PC-9 (cell line): ENCODE measurements at regions of chr16 and their contacts with region 1.

Region 1: DNA sequence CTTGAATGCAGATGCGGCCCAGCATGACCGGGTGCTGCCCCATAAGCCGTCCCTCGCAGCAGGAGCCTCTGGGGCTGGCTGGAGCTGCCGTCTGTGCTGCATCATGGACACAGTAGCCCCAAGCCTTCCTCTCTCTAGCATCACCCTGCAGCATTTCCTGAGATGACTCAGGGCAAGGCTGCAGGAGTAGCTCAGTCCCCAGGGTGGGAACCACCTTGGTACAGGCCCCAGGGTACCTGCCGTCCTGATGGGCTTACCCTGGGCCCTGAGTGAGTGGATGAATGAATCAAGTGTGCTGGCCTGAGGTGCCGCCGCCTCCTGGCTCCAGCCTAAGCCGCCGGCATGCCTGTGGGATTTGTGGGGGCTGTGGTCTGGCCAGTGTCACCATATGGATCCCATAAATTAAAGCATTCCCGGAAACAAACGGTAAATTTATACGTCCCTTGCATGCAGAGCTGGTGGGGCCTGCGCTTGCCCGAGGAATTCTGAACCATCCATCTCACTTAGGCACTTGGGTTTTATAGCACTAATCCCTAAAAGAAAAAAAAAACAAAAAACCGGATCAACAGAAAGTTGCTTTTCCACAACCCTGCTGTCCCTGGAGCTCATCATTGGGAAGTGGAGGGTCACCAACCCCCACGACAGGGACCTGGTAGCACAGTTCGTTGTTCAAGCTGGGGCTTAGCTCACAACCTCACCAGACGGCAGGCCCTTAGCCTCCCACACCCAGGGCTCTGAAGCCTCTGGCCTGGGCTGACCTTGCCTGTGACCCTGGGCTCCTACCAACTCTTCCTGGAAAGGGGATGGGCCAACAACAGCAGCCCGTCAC is 242.6 kb upstream of the CIBAR2 start:
- DNase-seq: peak; percentile 77 to 95
- H3K4me3 ChIP-seq: peak overlapping the region; percentile 27; the same call in 1 of the 2 replicates
- H3K27ac ChIP-seq: peak overlapping the region; percentile 92
- H3K4me1 ChIP-seq: peaks cover 62% of the 10 kb centered on the region
- H3K27me3 ChIP-seq: no peaks in the 10 kb centered on the region
- CTCF ChIP-seq: no peak

Region 2: GRCh38 chr16:85393674-85394483 is 39.0 kb after region 1 on chr16:
- CTCF ChIA-PET with region 1: no interaction called
- POLR2A ChIA-PET with region 1: no interaction called
- intact Hi-C with region 1: loop called (anchors 1 kb)
- DNase-seq: no peak
- H3K4me3 ChIP-seq: no peak overlapping the region
- H3K27ac ChIP-seq: no peak overlapping the region
- H3K4me1 ChIP-seq: peaks cover 36% of the 10 kb centered on the region
- H3K27me3 ChIP-seq: no peaks in the 10 kb centered on the region
- CTCF ChIP-seq: peak; percentile 66

Region 3: GRCh38 chr16:85528528-85529387 is 173.9 kb after region 1 on chr16:
- CTCF ChIA-PET with region 1: no interaction called
- POLR2A ChIA-PET with region 1: no interaction called
- intact Hi-C with region 1: loop called (anchors 5 kb)
- DNase-seq: no peak
- H3K4me3 ChIP-seq: no peak overlapping the region
- H3K27ac ChIP-seq: no peak overlapping the region
- H3K4me1 ChIP-seq: peaks cover 25% of the 10 kb centered on the region
- H3K27me3 ChIP-seq: no peaks in the 10 kb centered on the region
- CTCF ChIP-seq: peak; percentile 60

Region 4: DNA sequence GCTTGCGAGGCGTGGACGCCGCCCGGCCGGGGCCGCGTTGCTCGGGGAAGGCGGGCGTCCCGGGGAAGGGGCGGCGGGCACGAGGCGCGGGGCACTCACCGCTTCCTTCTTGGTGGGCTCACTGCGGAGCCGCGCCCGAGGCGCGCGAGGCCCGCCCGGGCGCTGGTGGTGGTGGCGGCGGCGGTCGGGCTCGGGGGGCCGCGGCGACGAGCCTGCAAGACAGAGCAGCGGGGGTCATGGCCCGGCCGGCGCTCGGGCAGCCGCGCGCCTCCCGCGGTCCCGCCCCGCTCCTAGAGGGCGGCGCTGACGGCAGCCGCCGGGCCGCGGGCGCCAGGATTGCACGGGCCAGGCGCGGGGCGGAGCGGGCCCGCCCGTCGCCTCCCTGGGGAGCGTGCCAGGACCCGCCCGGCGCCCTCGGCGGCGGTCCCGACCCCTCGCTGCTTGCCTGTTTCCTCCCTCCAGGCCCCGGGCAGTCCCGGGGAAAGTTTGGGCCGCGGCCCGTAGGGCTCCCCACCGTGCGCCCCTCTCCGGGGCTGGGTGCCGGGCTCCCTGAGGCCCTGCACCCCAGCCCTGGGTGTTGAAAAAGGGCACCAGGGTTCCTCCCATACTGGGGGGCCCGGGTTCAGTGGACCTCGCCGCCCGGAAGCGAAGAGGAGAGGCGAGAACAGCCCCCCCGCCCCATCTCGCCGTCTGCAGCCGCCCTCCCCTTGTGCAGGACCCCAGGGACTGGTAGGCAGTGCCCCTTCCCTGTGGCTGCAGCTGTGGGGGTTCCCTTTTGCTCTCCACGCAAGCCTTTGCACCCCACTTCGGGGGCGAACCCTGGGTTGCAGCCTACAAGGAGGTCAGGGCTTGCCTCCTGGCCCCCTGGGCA is 396.2 kb after region 1 on chr16 and contains the start of gene C16orf74:
- CTCF ChIA-PET with region 1: no interaction called
- POLR2A ChIA-PET with region 1: no interaction called
- intact Hi-C with region 1: loop called (anchors 10 kb)
- DNase-seq: peak in 1 of 2 experiments; percentile 73
- H3K4me3 ChIP-seq: peak within 1 kb of the TSS; percentile 91
- H3K27ac ChIP-seq: peak within 1 kb of the TSS; percentile 74
- H3K4me1 ChIP-seq: peaks cover 66% of the 10 kb centered on the region
- H3K27me3 ChIP-seq: no peaks in the 10 kb centered on the region
- CTCF ChIP-seq: no peak
- total RNA-seq, gene C16orf74: 44.3 and 51.6 TPM in 2 replicates